Left cardiac atrium (tissue), 4 donors: ENCODE measurements at regions of chr18 and their contacts with region 1.

Region 1: DNA sequence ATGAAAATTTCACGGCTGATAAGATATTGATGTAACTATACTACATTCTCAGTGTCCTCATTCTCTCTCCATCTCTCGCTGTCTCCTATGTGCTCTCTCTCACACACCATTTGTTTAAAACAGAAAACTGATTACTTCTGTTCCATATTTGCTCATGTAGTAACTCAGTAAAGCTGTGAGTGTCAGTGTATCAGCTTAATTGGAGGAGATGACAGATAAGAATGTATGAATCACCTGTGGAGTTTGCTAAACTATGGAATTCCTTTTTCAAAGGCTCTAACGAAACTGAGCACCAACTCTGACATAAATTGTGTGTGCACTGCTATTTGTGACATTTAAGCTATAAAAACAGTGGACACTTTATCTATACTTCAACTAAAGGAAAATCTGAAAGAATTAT is 1080.0 kb downstream of the DSC3 start:
- DNase-seq: no peak
- ATAC-seq: no peak

Region 2: GRCh38 chr18:29871246-29871645 is 91.3 kb before region 1 on chr18:
- intact Hi-C with region 1: no loop called
- DNase-seq: no peak
- ATAC-seq: no peak

Region 3: DNA sequence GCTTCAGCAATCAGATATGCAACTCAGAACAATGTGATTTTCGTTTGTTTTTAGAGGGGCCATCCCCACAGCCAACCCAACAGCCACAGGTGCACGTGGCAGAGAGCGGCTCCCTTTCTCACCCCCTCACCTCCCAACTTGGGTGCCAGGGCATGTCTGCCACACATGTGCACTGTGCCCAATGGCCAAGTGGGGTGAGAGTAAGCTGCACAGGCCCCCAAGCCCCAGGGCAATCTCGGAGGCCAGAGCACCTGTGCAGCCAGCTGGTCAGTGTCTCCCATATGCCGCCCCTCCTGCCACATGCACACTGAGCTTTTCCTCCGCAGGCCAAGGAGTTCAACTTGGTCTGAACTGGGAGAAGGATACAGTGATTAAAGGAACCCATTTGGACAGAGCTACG is 50.2 kb before region 1 on chr18:
- intact Hi-C with region 1: loop called in 1 of 2 experiments (anchors 10 kb)
- DNase-seq: no peak
- ATAC-seq: no peak